Panc1 (cell line): ENCODE measurements at regions of chr7 and their contacts with region 1.

Region 1: DNA sequence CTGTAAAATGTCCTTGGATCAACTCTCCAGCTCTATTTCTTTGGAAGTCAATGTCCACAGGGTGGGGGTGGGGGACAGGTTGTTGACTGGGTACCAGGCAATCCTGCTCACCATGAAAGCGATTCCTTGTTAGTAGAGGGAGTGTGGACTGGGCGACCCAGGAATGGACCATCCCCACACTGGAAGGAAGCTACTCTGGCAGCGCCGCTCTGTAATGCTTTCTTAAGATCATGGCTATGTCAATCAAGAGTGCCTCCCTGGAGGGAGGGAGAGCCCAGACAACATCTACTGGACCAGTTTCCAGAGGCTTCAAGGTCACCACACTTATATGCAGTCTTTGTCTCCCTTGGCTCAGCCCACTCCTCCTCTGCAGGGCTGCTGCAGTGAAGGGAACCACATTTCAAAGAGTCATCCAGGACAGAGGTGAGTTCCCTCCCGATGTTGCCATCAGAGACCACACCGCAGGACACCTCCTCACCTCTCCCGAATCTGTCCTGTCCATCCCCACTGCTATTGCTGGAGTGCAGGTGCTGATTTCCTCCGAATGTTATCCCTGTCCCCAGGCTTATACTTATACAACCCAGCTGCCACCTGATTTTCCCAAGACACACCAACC is 6.9 kb downstream of the GIMAP5 start:
- DNase-seq: no peak
- ATAC-seq: no peak
- H3K4me3 ChIP-seq: no peak overlapping the region
- H3K27ac ChIP-seq: no peak overlapping the region
- H3K4me1 ChIP-seq: no peaks in the 10 kb centered on the region
- H3K27me3 ChIP-seq: peaks cover 14% of the 10 kb centered on the region
- CTCF ChIP-seq: no peak

Region 2: GRCh38 chr7:150717814-150718420 is 26.2 kb before region 1 on chr7:
- CTCF ChIA-PET with region 1: no interaction called
- POLR2A ChIA-PET with region 1: interaction called, 14 read pairs
- in situ Hi-C with region 1: no loop called
- intact Hi-C with region 1: no loop called
- DNase-seq: no peak
- ATAC-seq: no peak
- H3K4me3 ChIP-seq: no peak overlapping the region
- H3K27ac ChIP-seq: no peak overlapping the region
- H3K4me1 ChIP-seq: no peaks in the 10 kb centered on the region
- H3K27me3 ChIP-seq: no peaks in the 10 kb centered on the region; the same call in 1 of the 2 replicates
- CTCF ChIP-seq: no peak